Transverse colon (tissue), 4 donors: ENCODE measurements at regions of chr11 and their contacts with region 1.

Region 1: DNA sequence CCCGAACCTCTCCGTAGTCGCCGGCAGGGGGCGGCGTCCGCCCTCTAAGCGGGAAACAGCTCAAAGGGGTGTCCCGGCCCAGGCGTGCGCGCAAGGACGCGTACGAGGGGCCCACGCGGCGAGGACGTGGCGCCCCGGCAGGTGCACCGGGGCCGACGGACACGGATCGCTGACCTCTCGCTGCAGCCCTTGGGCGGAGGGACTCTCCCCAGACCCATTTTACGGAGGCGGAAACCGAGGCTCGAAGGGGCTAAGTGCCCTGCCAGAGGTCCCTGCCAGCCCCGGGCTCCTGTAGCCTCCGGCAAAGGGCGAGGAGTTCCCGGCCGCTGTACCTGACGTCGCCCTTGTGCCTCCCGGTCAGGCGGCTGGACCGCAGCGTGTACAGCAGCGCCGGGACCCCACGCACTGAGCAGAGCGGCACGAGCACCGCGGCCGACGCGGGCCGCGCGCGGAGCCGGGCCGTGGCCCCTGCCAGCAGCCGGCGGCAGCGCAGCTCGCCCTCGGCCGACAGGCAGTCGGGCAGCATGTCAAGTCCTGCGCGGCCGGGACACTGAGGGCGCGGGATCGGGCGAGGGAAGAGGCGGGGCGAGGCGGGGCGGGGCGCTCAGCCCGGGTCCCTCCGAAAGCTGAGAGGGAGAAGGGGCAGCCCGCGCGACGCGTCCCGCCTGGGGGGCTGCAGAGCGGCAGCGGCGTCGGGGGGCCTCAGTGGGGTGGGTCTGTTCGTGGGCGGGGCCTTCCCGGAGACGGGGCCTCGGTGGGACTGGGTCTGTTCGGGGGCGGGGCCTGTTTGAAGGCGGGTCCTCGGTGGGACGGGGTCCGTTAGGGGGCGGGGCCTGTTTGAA is at the start of gene NUDT8:
- DNase-seq: peak; percentile 90
- H3K4me3 ChIP-seq: peak within 1 kb of the TSS; percentile 47 to 68 (median 58)
- H3K27ac ChIP-seq: peak within 1 kb of the TSS; percentile 91 to 98 (median 97)
- H3K4me1 ChIP-seq: peaks cover 9 to 36% (median 33%) of the 10 kb centered on the region in 4 donors
- H3K27me3 ChIP-seq: no peaks in the 10 kb centered on the region
- CTCF ChIP-seq: peak; percentile 91 to 98 (median 95)
- EP300 ChIP-seq: no peak
- POLR2A ChIP-seq: no peak
- total RNA-seq, gene NUDT8: 21.3 to 68.5 (median 26.9) TPM

Region 2: GRCh38 chr11:67583247-67584204 is 46.1 kb before region 1 on chr11 and contains the start of gene GSTP1:
- in situ Hi-C with region 1: no loop called
- intact Hi-C with region 1: loop called (anchors 1 kb)
- DNase-seq: peak; percentile 92
- H3K4me3 ChIP-seq: peak within 1 kb of the TSS; percentile 60 to 94 (median 86)
- H3K27ac ChIP-seq: peak within 1 kb of the TSS; percentile 99 to 100 (median 100)
- H3K4me1 ChIP-seq: peaks cover 8 to 38% (median 22%) of the 10 kb centered on the region in 4 donors
- H3K27me3 ChIP-seq: no peaks in the 10 kb centered on the region
- CTCF ChIP-seq: peak; percentile 53 to 80 (median 66)
- EP300 ChIP-seq: no peak
- POLR2A ChIP-seq: peak; percentile 89
- total RNA-seq, gene GSTP1: 166 to 578 (median 537) TPM

Region 3: GRCh38 chr11:67663923-67664692 is 34.5 kb after region 1 on chr11:
- in situ Hi-C with region 1: loop called in 1 of 4 experiments (anchors 5 kb)
- intact Hi-C with region 1: no loop called
- DNase-seq: no peak
- H3K4me3 ChIP-seq: no peak overlapping the region
- H3K27ac ChIP-seq: no peak overlapping the region
- H3K4me1 ChIP-seq: no peaks in the 10 kb centered on the region
- H3K27me3 ChIP-seq: no peaks in the 10 kb centered on the region
- CTCF ChIP-seq: no peak
- EP300 ChIP-seq: no peak
- POLR2A ChIP-seq: no peak